T-cell (primary cell): ENCODE measurements at regions of chr3 and their contacts with region 1.

Region 1: DNA sequence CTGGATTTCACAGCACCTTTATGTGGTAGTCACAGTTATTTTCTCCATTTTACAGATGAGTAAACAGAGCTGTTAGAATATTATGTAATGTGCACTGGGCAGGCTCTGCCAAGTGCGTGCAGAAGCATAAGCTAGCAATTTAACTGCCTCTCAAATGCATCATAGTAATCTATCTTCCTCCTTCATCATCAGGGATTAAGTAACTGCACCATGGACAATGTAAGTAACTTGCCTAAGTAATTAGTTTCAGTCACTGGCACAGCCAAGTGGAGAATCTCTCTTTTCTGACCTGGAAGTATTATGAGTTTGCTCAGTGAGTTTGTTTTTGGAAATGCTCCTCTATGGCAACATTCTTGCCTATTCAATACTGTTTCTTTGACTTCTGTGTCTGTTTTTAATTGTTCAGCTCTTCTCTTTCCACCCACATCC is 260.5 kb downstream of the PTPRG start:
- DNase-seq: no peak
- ATAC-seq: no peak
- H3K4me3 ChIP-seq: no peak overlapping the region
- H3K4me3 Mint-ChIP-seq: no peak overlapping the region
- H3K27ac ChIP-seq: no peak overlapping the region
- H3K27ac Mint-ChIP-seq: no peak overlapping the region
- H3K4me1 ChIP-seq: no peaks in the 10 kb centered on the region
- H3K4me1 Mint-ChIP-seq: no peaks in the 10 kb centered on the region
- H3K27me3 ChIP-seq: no peaks in the 10 kb centered on the region
- H3K27me3 Mint-ChIP-seq: peaks cover 0 to 3% of the 10 kb centered on the region in 2 donors

Region 2: GRCh38 chr3:61778145-61778494 is 43.7 kb before region 1 on chr3:
- CTCF ChIA-PET with region 1: no interaction called
- POLR2A ChIA-PET with region 1: no interaction called
- DNase-seq: no peak
- ATAC-seq: no peak
- H3K4me3 ChIP-seq: no peak overlapping the region
- H3K4me3 Mint-ChIP-seq: no peak overlapping the region
- H3K27ac ChIP-seq: no peak overlapping the region
- H3K27ac Mint-ChIP-seq: no peak overlapping the region
- H3K4me1 ChIP-seq: no peaks in the 10 kb centered on the region
- H3K4me1 Mint-ChIP-seq: no peaks in the 10 kb centered on the region
- H3K27me3 ChIP-seq: no peaks in the 10 kb centered on the region
- H3K27me3 Mint-ChIP-seq: peaks cover 0 to 12% of the 10 kb centered on the region in 2 donors

Region 3: DNA sequence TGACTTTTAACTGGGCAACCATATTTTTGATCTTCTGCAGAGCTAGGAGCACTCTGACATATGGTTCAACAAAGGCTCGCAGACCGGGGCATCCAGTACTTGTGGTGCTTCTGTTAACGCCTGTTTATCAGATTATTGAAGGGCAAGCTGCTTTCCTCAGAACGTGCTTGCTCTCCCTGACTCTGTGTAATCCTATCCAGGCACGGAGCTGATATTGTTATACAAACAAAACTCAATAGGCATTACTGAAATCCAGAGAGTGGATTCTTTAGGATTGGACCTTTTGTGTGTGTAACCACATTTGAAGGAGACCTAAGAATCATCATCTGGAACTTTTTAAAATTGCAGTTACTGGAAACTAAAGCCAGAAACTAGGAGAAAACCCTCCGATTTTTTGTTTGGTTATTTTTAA is 14.0 kb before region 1 on chr3:
- CTCF ChIA-PET with region 1: no interaction called
- POLR2A ChIA-PET with region 1: interaction called in 1 of 2 experiments, 16 read pairs
- DNase-seq: no peak
- ATAC-seq: no peak
- H3K4me3 ChIP-seq: no peak overlapping the region
- H3K4me3 Mint-ChIP-seq: no peak overlapping the region
- H3K27ac ChIP-seq: no peak overlapping the region
- H3K27ac Mint-ChIP-seq: no peak overlapping the region
- H3K4me1 ChIP-seq: no peaks in the 10 kb centered on the region
- H3K4me1 Mint-ChIP-seq: no peaks in the 10 kb centered on the region
- H3K27me3 ChIP-seq: no peaks in the 10 kb centered on the region
- H3K27me3 Mint-ChIP-seq: no peaks in the 10 kb centered on the region